ENCODE measurements at regions of chr9 and their contacts with region 1.

Region 1: GRCh38 chr9:72871685-72872084 is 81.2 kb downstream of the ALDH1A1 start:
- DNase-seq: peak; percentile 62
- H3K4me3 ChIP-seq: no peak overlapping the region
- H3K27ac ChIP-seq: peak overlapping the region; percentile 50
- H3K4me1 ChIP-seq: peaks cover 5% of the 10 kb centered on the region
- H3K27me3 ChIP-seq: no peaks in the 10 kb centered on the region
- CTCF ChIP-seq: peak; percentile 20 to 29
- POLR2A ChIP-seq: no peak

Region 2: DNA sequence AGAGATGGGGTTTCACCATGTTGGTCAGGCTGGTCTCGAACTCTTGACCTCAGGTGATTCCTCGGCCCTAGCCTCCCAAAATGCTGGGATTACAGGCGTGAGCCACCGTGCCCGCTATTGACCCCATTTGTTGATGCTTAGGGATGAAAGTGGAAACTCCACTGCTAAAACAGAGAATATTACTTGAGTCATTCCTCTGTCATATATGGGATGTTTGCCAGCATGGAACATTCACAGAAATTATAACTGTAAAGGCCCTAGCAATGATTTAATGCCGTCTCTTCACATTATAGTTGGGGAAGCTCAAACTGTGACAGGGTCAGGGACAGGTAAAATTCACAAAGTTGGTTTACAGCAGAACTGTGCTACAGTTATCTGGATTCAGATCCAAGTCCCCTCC is 255.8 kb before region 1 on chr9:
- CTCF ChIA-PET with region 1: no interaction called
- POLR2A ChIA-PET with region 1: no interaction called
- dilution Hi-C with region 1: no loop called
- intact Hi-C with region 1: no loop called
- DNase-seq: no peak
- H3K4me3 ChIP-seq: no peak overlapping the region
- H3K27ac ChIP-seq: no peak overlapping the region
- H3K4me1 ChIP-seq: no peaks in the 10 kb centered on the region
- H3K27me3 ChIP-seq: no peaks in the 10 kb centered on the region
- CTCF ChIP-seq: no peak
- POLR2A ChIP-seq: no peak

Region 3: DNA sequence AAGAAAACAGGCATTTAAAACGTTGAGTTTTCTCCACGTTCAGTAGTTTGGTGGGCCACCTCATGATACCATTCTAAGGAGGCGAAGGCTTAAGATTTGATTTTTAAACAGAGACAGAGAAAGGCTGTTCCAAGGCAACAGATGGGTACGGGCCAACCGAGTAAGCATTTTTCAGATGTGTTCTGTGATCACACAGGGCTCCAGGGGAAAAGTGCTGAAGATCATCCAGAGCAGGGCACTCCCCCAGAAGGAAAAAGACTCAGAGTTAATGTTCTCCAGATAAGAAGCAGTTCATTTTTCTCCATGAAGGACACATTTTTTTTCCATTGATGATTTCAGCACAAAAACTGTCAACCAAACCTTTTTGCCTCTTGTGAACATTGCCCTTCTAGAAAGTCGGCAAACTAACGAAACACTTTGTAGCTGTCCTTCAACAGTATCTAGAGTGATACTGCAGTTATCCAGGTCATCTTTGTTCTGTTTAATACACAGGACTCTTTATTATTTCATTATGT is 57.5 kb before region 1 on chr9:
- CTCF ChIA-PET with region 1: no interaction called
- POLR2A ChIA-PET with region 1: no interaction called
- dilution Hi-C with region 1: no loop called
- intact Hi-C with region 1: no loop called
- DNase-seq: no peak
- H3K4me3 ChIP-seq: no peak overlapping the region
- H3K27ac ChIP-seq: no peak overlapping the region
- H3K4me1 ChIP-seq: peaks cover 4% of the 10 kb centered on the region
- H3K27me3 ChIP-seq: peaks cover 0 to 3% of the 10 kb centered on the region in 2 experiments
- CTCF ChIP-seq: no peak
- POLR2A ChIP-seq: no peak

Region 4: GRCh38 chr9:72843520-72844439 is 27.9 kb before region 1 on chr9:
- CTCF ChIA-PET with region 1: interaction called, 4 read pairs
- POLR2A ChIA-PET with region 1: no interaction called
- dilution Hi-C with region 1: no loop called
- intact Hi-C with region 1: loop called (anchors 2 kb)
- DNase-seq: no peak
- H3K4me3 ChIP-seq: no peak overlapping the region
- H3K27ac ChIP-seq: no peak overlapping the region
- H3K4me1 ChIP-seq: no peaks in the 10 kb centered on the region
- H3K27me3 ChIP-seq: no peaks in the 10 kb centered on the region
- CTCF ChIP-seq: peak in 1 of 2 donors; percentile 9
- POLR2A ChIP-seq: no peak

Region 5: GRCh38 chr9:72952914-72953313 is 81.2 kb after region 1 on chr9 and contains the start of gene ALDH1A1:
- CTCF ChIA-PET with region 1: interaction called, 4 read pairs
- POLR2A ChIA-PET with region 1: no interaction called
- dilution Hi-C with region 1: no loop called
- intact Hi-C with region 1: loop called (anchors 5 kb)
- DNase-seq: peak; percentile 73
- H3K4me3 ChIP-seq: peak within 1 kb of the TSS; percentile 43 to 84 (median 54)
- H3K27ac ChIP-seq: peak within 1 kb of the TSS; percentile 65
- H3K4me1 ChIP-seq: peaks cover 7% of the 10 kb centered on the region
- H3K27me3 ChIP-seq: no peaks in the 10 kb centered on the region
- CTCF ChIP-seq: no peak
- POLR2A ChIP-seq: peak; percentile 55
- total RNA-seq, gene ALDH1A1: 220 and 287 TPM in 2 replicates

Region 6: DNA sequence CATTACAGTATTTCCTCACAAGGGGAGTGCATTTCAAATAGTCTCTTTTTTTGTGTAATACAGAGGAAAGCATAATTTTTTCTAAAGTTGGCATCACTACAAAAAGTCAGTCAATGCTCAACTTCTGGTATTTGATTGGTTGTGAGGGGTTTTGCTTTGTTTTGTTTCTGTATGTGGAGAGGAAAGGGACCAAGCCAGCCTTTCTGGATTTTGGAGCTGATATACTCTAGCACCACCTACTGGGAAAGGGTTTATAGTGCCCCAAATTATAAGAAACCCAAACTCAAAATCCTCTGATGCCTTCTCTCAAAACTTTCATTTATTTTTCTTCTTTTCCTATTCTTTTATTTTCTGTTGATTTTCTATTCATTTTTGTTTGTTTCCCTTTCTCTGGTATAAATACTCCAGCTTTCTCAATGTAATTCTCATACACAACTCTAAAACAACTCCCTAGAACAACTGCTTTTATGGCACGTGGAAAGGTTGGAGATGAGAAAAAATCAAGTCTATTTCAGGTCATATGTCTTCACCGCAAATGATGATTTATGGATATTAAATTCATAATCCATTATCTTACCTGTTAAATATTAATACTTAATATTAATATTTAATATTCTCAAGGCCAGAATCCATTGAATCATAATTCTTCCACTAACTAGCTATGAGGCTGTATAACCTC is 210.4 kb after region 1 on chr9:
- CTCF ChIA-PET with region 1: interaction called, 166 read pairs
- POLR2A ChIA-PET with region 1: no interaction called
- dilution Hi-C with region 1: loop called (anchors 25 kb)
- intact Hi-C with region 1: loop called (anchors 1 kb)
- DNase-seq: peak; percentile 90
- H3K4me3 ChIP-seq: no peak overlapping the region
- H3K27ac ChIP-seq: no peak overlapping the region
- H3K4me1 ChIP-seq: peaks cover 2% of the 10 kb centered on the region
- H3K27me3 ChIP-seq: no peaks in the 10 kb centered on the region
- CTCF ChIP-seq: peak; percentile 61 to 74
- POLR2A ChIP-seq: no peak

Region 7: DNA sequence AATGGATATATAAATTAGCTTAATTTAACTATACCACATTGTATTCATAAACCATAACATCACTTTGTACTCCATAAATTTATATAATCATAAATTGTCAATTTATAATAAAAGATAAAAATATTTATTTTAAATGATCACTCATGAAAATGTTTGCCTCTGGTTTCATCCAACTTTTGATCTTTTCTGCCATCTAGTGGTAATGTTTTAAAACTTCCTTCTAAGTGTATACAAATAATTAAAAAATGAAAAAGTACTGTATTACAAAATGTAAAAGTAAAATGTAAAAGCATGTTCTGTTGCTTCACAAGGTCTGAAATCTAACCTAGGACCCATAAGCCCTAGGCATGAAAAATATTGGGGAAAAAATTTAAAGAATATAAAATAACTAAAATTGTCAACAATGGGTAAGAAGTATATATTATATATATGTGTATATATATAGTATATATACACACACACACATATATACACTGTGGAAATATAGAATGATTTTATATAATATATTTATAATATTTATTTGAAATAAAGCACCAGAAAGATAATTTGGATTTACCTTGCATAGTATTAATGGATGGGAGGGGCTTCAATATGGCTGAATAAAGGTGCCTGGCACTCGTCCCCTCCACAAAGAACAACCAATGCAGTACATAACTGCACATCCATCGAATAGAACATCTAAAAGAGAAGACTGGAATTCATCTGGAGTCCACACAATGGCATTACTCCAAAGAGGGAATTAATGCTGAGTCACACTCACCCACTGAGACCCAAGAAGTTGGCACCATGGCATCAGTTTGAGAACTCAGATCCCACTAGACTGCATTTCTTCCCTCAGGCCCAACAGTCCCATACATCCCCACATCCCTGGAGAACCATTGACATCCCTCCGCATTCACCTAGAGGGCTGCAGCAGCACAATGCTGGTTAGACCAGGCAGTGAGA is 312.5 kb after region 1 on chr9:
- CTCF ChIA-PET with region 1: interaction called, 10 read pairs
- POLR2A ChIA-PET with region 1: no interaction called
- dilution Hi-C with region 1: no loop called
- intact Hi-C with region 1: loop called (anchors 1 kb)
- DNase-seq: peak; percentile 47
- H3K4me3 ChIP-seq: no peak overlapping the region
- H3K27ac ChIP-seq: no peak overlapping the region
- H3K4me1 ChIP-seq: no peaks in the 10 kb centered on the region
- H3K27me3 ChIP-seq: no peaks in the 10 kb centered on the region
- CTCF ChIP-seq: peak; percentile 9 to 10
- POLR2A ChIP-seq: no peak